ENCODE measurements at regions of chr2 and their contacts with region 1.

Region 1: DNA sequence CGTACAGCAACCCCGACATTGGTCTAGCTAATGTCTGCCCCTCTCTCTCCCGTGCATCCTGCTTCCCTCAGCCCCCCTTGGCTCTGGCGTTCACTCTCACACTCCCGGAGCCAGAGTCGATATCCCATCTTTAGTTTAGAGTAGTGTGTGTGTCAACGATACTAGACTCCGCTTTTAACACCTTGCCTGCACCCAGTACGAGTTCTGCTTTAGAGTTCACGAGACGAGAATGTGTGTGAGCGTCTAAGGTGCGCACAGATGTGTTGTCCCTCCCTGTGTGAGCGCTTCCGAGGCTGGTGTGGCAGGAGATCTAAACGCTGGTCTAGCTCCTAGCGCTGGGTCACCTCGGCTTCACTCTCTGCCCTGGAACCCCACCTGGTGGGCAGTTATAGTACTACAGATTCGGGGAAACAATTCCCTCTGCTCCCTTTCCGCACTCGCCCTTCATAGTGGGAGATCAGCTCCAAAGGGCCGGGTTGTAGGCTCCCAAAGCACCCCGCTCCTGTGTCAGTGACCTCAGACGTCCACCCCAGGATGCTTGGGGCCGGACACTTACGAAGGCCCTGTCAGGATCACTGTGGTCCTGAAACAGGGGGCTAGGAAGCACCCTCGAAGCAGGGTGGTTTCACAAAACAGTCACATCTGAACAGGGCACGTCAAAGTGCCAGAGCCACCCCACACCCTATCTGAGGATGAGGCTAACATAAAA is 2.6 kb upstream of the CYP26B1 start:
- DNase-seq: peak; percentile 64
- ATAC-seq: peak; percentile 86
- H3K4me3 ChIP-seq: no peak overlapping the region; the same call in 1 of the 2 replicates
- H3K27ac ChIP-seq: no peak overlapping the region
- H3K4me1 ChIP-seq: peaks cover 14% of the 10 kb centered on the region; the same call in 1 of the 2 replicates
- H3K27me3 ChIP-seq: peaks cover 89% of the 10 kb centered on the region
- CTCF ChIP-seq: peak; percentile 88
- POLR2A ChIP-seq: no peak
- RAD21 ChIP-seq: peak; percentile 91

Region 2: DNA sequence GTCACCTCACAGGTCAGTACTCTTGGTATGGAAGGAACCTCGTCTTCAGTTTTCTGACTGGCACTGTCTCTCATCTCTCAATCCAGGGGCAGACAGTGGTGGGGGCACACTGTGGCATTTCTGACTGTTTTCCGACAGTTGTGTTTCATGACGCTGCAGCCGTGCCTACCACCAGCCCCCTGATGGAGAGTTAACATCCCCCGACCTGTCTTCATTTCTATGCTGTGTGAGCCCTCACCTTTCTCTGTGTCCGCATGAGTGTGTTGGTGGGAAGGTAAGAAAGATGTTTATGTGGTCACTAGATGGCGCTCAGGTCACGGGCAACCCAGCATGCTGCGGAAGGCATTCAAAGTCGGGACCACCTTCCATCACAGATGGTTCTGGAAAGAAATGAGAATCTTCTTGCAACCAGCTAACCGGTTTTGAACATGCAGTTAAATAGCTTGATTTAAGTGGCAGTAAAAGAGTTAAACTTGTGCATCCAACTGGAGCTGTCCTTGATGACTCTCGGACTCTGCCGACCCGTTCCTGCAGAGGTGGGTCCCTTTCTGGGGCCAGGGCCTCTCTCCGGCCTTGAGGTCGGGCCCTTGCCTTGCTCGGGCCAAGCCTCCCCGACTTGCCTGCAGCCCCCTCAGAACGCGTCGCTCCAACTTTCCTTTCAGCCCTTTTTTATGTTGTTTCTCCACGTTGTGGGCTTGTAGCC is 604.6 kb before region 1 on chr2:
- CTCF ChIA-PET with region 1: interaction called, 3 read pairs
- POLR2A ChIA-PET with region 1: no interaction called
- dilution Hi-C with region 1: no loop called
- in situ Hi-C with region 1: loop called (anchors 5 kb)
- intact Hi-C with region 1: loop called (anchors 1 kb)
- DNase-seq: peak; percentile 55
- ATAC-seq: peak; percentile 79
- H3K4me3 ChIP-seq: no peak overlapping the region
- H3K27ac ChIP-seq: no peak overlapping the region
- H3K4me1 ChIP-seq: no peaks in the 10 kb centered on the region
- H3K27me3 ChIP-seq: peaks cover 24% of the 10 kb centered on the region
- CTCF ChIP-seq: peak; percentile 82
- POLR2A ChIP-seq: no peak
- RAD21 ChIP-seq: peak; percentile 83

Region 3: GRCh38 chr2:71603311-71603811 is 547.0 kb before region 1 on chr2:
- CTCF ChIA-PET with region 1: no interaction called
- POLR2A ChIA-PET with region 1: no interaction called
- dilution Hi-C with region 1: no loop called
- in situ Hi-C with region 1: loop called (anchors 5 kb)
- intact Hi-C with region 1: no loop called
- DNase-seq: no peak
- ATAC-seq: no peak
- H3K4me3 ChIP-seq: no peak overlapping the region
- H3K27ac ChIP-seq: no peak overlapping the region
- H3K4me1 ChIP-seq: no peaks in the 10 kb centered on the region
- H3K27me3 ChIP-seq: peaks cover 50% of the 10 kb centered on the region
- CTCF ChIP-seq: no peak
- POLR2A ChIP-seq: no peak
- RAD21 ChIP-seq: no peak

Region 4: DNA sequence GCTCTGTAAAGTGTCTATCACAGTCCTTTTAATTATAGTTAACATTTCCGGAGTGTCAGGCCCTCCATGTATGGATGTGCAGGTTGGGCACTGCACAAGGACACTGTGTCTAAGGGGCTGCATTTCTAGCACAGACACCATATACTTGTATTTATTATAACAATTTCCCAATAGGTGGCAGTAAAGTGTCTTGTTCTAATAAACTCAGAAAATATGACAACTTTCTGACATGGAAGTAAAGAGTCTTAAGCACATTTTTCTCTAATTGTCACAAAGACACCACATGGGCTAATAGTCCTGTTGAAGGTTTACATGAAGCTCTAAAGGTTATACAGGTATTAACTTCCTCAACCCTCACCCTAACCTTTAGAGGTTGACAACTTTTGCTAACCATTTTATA is 540.4 kb before region 1 on chr2:
- CTCF ChIA-PET with region 1: interaction called, 3 read pairs
- POLR2A ChIA-PET with region 1: no interaction called
- dilution Hi-C with region 1: no loop called
- in situ Hi-C with region 1: no loop called
- intact Hi-C with region 1: loop called (anchors 2 kb)
- DNase-seq: peak; percentile 54
- ATAC-seq: peak; percentile 81
- H3K4me3 ChIP-seq: no peak overlapping the region
- H3K27ac ChIP-seq: no peak overlapping the region
- H3K4me1 ChIP-seq: no peaks in the 10 kb centered on the region
- H3K27me3 ChIP-seq: peaks cover 42% of the 10 kb centered on the region
- CTCF ChIP-seq: peak; percentile 49
- POLR2A ChIP-seq: no peak
- RAD21 ChIP-seq: peak; percentile 43

Region 5: DNA sequence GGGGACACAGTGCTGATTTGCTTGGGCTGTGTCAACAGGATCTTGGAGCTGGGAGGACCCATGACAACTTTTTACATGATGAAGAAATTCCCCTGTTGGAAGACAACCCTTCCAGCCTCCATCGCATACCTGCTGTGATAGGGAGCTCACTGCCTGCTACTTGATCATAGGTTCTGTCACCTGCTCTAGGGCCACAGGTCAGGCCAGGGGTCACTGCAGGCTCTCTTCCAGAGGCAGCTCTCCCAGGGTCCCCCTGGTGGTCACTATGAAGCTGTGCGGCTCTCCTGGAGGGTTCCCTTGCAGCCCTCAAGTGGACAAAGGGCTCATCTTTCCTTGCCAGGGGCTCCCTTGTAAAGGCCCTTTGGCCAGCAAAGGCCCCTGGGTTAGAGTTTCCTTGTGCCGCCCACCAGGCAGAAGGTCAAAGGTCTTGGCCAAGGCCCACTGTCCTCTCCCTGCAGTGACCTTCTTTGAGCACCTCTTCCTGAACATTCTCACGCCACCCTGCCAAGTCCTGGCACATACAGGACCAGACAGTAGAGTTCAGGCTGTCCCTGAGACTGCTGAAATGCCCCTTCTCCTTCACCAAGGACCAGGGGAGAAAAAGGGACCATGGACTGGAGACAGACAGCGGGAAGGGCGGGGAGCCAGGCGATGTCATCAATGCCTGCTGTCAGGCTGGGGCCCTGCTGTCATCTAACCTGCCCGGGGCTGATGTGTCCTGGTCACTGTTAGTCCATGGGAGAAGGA is 351.9 kb before region 1 on chr2:
- CTCF ChIA-PET with region 1: interaction called, 6 read pairs
- POLR2A ChIA-PET with region 1: no interaction called
- dilution Hi-C with region 1: no loop called
- in situ Hi-C with region 1: loop called (anchors 10 kb)
- intact Hi-C with region 1: loop called (anchors 1 kb)
- DNase-seq: peak; percentile 10
- ATAC-seq: peak; percentile 62; the same call in 1 of the 2 replicates
- H3K4me3 ChIP-seq: no peak overlapping the region
- H3K27ac ChIP-seq: no peak overlapping the region
- H3K4me1 ChIP-seq: peaks cover 12% of the 10 kb centered on the region
- H3K27me3 ChIP-seq: peaks cover 10% of the 10 kb centered on the region
- CTCF ChIP-seq: peak; percentile 61
- POLR2A ChIP-seq: no peak
- RAD21 ChIP-seq: peak; percentile 47

Region 6: DNA sequence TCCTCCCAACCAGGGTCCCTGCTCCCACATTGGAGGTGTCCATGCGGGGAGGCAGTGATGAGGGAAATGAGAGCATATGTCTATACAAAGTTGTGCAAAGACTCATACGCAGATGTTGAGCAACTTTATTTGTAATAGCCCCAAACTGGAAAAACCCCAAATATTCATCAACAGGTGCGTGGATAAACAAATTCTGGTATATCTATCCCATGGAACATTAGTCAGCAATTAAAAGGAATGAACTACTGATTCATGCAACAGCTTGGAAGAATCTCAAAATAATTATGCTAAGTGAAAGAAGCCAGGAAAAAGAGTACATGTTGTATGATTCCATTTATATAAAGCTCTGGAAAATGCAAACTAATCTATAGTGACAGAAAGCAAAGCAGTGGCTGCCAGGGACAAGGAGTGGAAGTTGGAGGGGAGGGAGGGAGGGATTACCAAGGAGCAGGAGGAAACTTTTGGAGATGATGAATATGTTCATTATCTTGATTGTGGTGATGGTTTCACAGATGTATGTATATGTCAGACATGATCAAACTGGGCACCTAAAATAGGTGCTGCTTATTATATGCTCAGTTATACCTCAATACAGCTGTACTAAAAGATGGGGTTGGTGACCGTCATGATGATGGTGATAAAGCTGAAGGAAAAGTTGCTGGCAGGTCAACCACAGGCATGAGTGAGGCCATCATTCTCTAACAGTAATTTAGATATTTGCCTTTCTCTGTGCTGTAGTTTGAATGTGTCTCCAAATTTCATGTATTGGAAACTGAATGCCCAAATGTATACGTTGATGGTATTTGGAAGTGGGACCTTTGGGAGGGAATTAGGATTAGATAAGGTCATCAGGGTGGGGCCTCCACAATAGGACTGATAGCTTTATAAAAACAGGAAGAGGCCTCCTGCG is 273.5 kb before region 1 on chr2:
- CTCF ChIA-PET with region 1: no interaction called
- POLR2A ChIA-PET with region 1: no interaction called
- dilution Hi-C with region 1: no loop called
- in situ Hi-C with region 1: no loop called
- intact Hi-C with region 1: loop called (anchors 1 kb)
- DNase-seq: no peak
- ATAC-seq: no peak
- H3K4me3 ChIP-seq: no peak overlapping the region
- H3K27ac ChIP-seq: no peak overlapping the region
- H3K4me1 ChIP-seq: peaks cover 12% of the 10 kb centered on the region
- H3K27me3 ChIP-seq: peaks cover 8% of the 10 kb centered on the region
- CTCF ChIP-seq: no peak
- POLR2A ChIP-seq: no peak
- RAD21 ChIP-seq: no peak

Region 7: DNA sequence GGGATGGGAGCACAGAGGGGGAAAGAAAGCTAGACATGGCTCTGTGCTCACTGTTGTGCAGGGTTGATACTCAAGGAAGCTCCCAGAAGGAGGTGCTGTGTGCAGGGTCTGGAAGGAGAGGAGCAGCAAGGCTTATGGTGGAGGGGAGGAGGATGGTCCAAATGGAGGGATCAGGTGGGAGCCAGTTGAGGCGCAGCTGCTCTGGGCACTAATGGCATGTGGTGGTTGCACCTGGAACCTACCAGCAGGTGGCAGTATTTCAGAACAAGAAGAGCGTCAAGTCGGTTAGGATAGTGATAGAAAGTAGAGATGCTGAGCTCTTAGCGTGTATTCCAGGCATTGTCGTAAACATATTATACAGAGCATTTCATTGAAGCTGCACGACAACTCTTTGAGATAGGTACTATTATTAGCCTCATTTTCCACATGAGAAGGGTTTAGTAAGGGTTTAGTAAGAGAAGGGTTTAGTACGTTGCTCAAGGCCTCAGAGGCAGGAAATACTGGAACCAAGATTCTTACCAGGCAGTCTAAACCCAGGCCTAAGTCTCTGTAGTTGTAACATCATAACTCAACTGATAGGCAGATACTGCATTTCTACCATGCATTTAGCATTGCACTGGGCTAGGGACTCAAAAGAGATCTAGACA is 226.3 kb before region 1 on chr2:
- CTCF ChIA-PET with region 1: interaction called, 10 read pairs
- POLR2A ChIA-PET with region 1: no interaction called
- dilution Hi-C with region 1: no loop called
- in situ Hi-C with region 1: loop called (anchors 10 kb)
- intact Hi-C with region 1: loop called (anchors 1 kb)
- DNase-seq: peak; percentile 65
- ATAC-seq: peak; percentile 72
- H3K4me3 ChIP-seq: no peak overlapping the region
- H3K27ac ChIP-seq: no peak overlapping the region
- H3K4me1 ChIP-seq: no peaks in the 10 kb centered on the region
- H3K27me3 ChIP-seq: peaks cover 12% of the 10 kb centered on the region
- CTCF ChIP-seq: peak; percentile 76
- POLR2A ChIP-seq: no peak
- RAD21 ChIP-seq: peak; percentile 67

Measured in IMR-90 (cell line).